ENCODE measurements at regions of chr22 and their contacts with region 1.

Region 1: GRCh38 chr22:38941488-38941987 is 15.9 kb upstream of the APOBEC3A start:
- H3K4me3 Mint-ChIP-seq: peak overlapping the region; percentile 68
- H3K27ac Mint-ChIP-seq: peak overlapping the region; percentile 87
- H3K4me1 Mint-ChIP-seq: peaks cover 82% of the 10 kb centered on the region
- H3K27me3 Mint-ChIP-seq: peaks cover 48% of the 10 kb centered on the region

Region 2: GRCh38 chr22:38953577-38954413 is 12.3 kb after region 1 on chr22:
- intact Hi-C with region 1: loop called (anchors 2 kb)
- H3K4me3 Mint-ChIP-seq: no peak overlapping the region
- H3K27ac Mint-ChIP-seq: peak overlapping the region; percentile 87
- H3K4me1 Mint-ChIP-seq: peaks cover 90% of the 10 kb centered on the region
- H3K27me3 Mint-ChIP-seq: peaks cover 42% of the 10 kb centered on the region

Region 3: GRCh38 chr22:38974826-38975175 is 33.3 kb after region 1 on chr22:
- intact Hi-C with region 1: loop called (anchors 5 kb)
- H3K4me3 Mint-ChIP-seq: no peak overlapping the region
- H3K27ac Mint-ChIP-seq: no peak overlapping the region
- H3K4me1 Mint-ChIP-seq: peaks cover 44% of the 10 kb centered on the region
- H3K27me3 Mint-ChIP-seq: peaks cover 34% of the 10 kb centered on the region

Region 4: DNA sequence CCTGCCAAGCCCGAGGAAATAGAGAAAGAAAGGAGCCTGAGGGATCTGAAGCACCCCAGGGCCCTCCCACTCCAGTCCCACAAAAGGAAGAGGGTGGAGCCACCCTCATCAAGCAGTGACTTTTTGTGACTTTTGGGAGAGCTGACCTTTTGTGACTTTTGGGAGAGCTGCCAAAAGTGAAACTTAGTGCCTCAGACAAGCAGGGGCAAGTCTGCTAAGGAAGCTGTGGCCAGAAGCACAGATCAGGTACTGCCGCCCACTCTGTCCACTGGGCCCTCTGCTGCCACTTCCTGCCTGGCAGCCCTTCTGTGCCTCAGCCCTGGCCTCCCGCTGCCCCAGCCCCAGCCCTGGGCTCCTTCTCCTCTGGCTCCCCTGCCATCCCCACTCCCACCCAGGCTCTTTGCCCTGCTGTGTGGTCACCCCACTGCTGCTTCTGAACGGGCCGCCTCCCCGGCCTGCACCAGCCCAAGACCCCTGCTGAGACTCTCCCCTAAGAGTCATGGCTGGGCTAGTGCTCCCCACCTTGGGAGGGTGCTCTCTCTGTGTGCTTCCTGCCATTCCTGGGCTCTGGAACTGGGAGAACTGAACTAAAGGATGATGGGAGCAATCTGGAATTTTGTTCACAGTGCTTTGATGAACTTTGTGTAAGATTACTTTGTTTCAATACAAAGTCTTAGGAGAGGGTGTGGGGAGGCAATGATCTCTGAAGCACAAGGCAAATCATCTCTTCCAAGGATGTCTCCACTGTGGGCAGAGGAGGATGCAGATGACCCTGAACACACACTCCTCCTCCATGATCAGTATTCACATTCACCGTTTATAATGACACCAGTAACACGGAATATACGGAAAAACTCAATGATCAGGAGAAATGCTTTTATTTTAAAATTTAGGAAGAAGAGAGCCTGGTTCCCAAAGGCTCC is 155.8 kb after region 1 on chr22 and contains the start of gene APOBEC3H:
- intact Hi-C with region 1: no loop called
- H3K4me3 Mint-ChIP-seq: peak within 1 kb of the TSS; percentile 37
- H3K27ac Mint-ChIP-seq: peak within 1 kb of the TSS; percentile 52
- H3K4me1 Mint-ChIP-seq: peaks cover 43% of the 10 kb centered on the region
- H3K27me3 Mint-ChIP-seq: peaks cover 22% of the 10 kb centered on the region